ENCODE measurements at regions of chr7 and their contacts with region 1.

Region 1: DNA sequence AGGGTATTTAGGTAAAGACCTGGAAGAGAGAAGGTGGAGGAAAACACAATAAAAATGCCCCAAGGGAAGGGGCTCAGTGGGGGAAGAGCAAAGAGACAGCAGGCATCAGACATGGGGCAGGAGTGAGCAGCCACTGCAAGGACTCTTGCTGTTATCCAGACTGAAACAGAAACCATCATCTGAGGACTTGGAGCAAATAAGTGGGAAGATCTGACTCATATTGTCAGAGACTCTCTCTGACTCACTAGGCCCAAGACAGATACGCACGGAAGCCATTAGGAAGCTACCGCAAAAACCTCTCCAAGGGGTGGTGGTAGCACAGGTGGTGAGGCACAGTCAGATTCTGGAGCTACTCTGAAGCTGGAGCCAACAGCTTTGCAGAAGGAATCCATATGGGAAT is 110.7 kb downstream of the RNF32 start:
- DNase-seq: peak; percentile 85
- ATAC-seq: peak; percentile 93
- H3K4me3 ChIP-seq: no peak overlapping the region
- H3K27ac ChIP-seq: peak overlapping the region; percentile 42
- H3K4me1 ChIP-seq: peaks cover 24% of the 10 kb centered on the region
- H3K27me3 ChIP-seq: no peaks in the 10 kb centered on the region
- CTCF ChIP-seq: no peak

Region 2: DNA sequence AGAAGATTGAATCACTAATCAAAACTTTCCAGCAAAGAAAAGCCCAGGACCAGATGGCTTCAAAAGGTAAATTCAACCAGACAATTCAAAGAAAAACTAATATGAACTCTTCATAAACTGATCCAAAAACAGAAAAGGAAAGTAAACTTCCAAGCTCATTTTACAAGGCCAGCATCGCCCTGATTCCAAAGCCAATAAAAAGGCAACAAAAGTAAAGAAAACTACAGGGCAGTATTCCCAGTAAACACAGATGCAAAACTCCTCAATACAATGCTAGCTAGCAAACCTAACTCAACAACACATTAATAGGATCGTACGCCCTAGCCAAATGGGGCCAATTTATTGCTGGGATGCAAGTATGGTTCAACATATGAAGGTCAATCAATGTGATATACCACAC is 57.7 kb before region 1 on chr7:
- CTCF ChIA-PET with region 1: no interaction called
- POLR2A ChIA-PET with region 1: no interaction called
- intact Hi-C with region 1: loop called (anchors 2 kb)
- DNase-seq: no peak
- ATAC-seq: peak; percentile 57
- H3K4me3 ChIP-seq: no peak overlapping the region
- H3K27ac ChIP-seq: no peak overlapping the region
- H3K4me1 ChIP-seq: no peaks in the 10 kb centered on the region
- H3K27me3 ChIP-seq: no peaks in the 10 kb centered on the region
- CTCF ChIP-seq: no peak

Region 3: DNA sequence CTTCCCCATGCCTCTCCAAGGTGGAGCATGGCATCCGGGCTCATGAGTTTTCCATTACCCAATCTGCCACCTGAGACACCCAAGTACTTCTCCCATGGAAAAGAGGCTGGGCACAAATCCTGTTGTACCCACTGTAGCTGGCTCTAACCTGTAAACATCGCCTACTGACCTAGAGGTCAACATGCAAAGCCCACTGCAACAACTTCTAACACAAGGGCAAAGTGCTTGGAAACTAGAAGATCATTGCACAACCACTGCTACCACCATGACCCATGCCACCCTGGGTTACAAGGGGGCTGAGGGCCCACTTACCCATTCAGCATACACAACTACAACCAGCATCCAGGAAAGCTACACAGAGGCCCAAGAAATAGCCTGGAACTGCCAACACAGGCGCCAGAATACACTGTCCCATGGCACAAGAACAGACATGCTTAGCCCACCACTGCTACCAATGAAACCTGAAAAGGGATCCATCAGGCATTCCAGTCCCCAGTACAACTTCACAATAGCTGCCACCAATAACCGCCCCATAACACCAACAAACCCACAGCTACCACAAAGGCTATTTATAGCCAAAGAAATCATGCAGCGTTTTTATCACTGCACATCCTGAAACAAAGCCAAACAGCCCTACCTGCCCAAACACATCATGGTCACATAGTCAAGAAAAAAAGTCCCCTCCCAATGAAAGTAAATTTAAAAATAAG is 47.4 kb before region 1 on chr7:
- CTCF ChIA-PET with region 1: no interaction called
- POLR2A ChIA-PET with region 1: no interaction called
- intact Hi-C with region 1: no loop called
- DNase-seq: no peak
- ATAC-seq: no peak
- H3K4me3 ChIP-seq: no peak overlapping the region
- H3K27ac ChIP-seq: no peak overlapping the region
- H3K4me1 ChIP-seq: no peaks in the 10 kb centered on the region
- H3K27me3 ChIP-seq: no peaks in the 10 kb centered on the region
- CTCF ChIP-seq: no peak

Region 4: GRCh38 chr7:156725077-156725476 is 26.2 kb before region 1 on chr7:
- CTCF ChIA-PET with region 1: no interaction called
- POLR2A ChIA-PET with region 1: no interaction called
- intact Hi-C with region 1: loop called (anchors 2 kb)
- DNase-seq: peak; percentile 89
- ATAC-seq: peak; percentile 89
- H3K4me3 ChIP-seq: peak overlapping the region; percentile 10; the same call in 1 of the 2 replicates
- H3K27ac ChIP-seq: peak overlapping the region; percentile 55
- H3K4me1 ChIP-seq: peaks cover 20% of the 10 kb centered on the region
- H3K27me3 ChIP-seq: no peaks in the 10 kb centered on the region
- CTCF ChIP-seq: no peak

Measured in PC-3 (cell line).